Activated B cell treated with CpG ODN at 0.5 μM for 24 hours (primary cell): ENCODE measurements at regions of chr12 and their contacts with region 1.

Region 1: GRCh38 chr12:46089407-46090157 is 99.2 kb upstream of the SCAF11 start:
- DNase-seq: no peak
- ATAC-seq: peak; percentile 92
- H3K4me3 Mint-ChIP-seq: no peak overlapping the region
- H3K27ac Mint-ChIP-seq: peak overlapping the region; percentile 30
- H3K4me1 Mint-ChIP-seq: peaks cover 15% of the 10 kb centered on the region
- H3K27me3 Mint-ChIP-seq: peaks cover 7% of the 10 kb centered on the region
- CTCF ChIP-seq: no peak

Region 2: GRCh38 chr12:46108721-46109120 is 19.1 kb after region 1 on chr12:
- CTCF ChIA-PET with region 1: no interaction called
- POLR2A ChIA-PET with region 1: interaction called, 4 read pairs
- intact Hi-C with region 1: loop called (anchors 2 kb)
- DNase-seq: no peak
- ATAC-seq: peak; percentile 87
- H3K4me3 Mint-ChIP-seq: peak overlapping the region; percentile 60
- H3K27ac Mint-ChIP-seq: peak overlapping the region; percentile 85
- H3K4me1 Mint-ChIP-seq: peaks cover 49% of the 10 kb centered on the region
- H3K27me3 Mint-ChIP-seq: no peaks in the 10 kb centered on the region
- CTCF ChIP-seq: no peak

Region 3: GRCh38 chr12:46354111-46354798 is 264.7 kb after region 1 on chr12:
- CTCF ChIA-PET with region 1: no interaction called
- POLR2A ChIA-PET with region 1: no interaction called
- intact Hi-C with region 1: no loop called
- DNase-seq: no peak
- ATAC-seq: no peak
- H3K4me3 Mint-ChIP-seq: no peak overlapping the region
- H3K27ac Mint-ChIP-seq: no peak overlapping the region
- H3K4me1 Mint-ChIP-seq: peaks cover 5% of the 10 kb centered on the region
- H3K27me3 Mint-ChIP-seq: no peaks in the 10 kb centered on the region
- CTCF ChIP-seq: no peak